ENCODE measurements at regions of chr18 and their contacts with region 1.

Region 1: DNA sequence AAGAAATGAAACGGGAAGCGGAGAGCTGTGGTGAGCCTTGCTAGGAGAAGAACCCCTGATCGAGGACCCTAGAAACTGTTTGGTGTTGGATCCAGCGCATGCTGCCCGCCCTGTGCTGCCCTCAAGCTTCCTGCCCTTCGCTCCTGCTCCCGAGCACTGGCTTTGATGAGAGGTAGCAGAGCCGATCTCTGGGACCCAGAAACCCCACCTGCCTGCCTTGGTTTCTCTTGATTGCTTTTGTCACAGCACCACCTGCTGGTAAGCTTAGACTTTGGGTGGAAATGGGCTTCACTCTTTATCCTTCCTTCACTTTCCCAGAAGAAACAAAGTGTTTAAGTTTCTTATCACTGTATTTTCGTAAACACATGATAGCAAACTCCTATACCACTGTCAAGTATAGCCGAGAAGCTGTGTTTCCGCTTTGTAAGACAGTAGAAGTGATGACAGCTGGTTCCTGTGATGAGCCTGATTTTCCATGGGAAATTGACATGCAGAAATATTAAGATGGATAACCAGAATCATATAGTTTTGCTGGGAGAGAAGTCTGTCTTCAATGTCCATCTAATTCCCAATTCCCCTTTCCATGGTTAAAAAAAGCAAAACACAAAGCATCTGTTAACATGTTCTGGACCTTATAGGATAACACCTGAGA is 267.4 kb downstream of the PHLPP1 start:
- DNase-seq: peak in 2 of 4 donors; percentile 53 to 67
- ATAC-seq: peak; percentile 89
- H3K4me3 ChIP-seq: peak overlapping the region in 1 of 2 donors; percentile 31
- H3K27ac ChIP-seq: no peak overlapping the region
- H3K4me1 ChIP-seq: peaks cover 0 to 27% of the 10 kb centered on the region in 2 donors
- H3K27me3 ChIP-seq: no peaks in the 10 kb centered on the region
- CTCF ChIP-seq: peak; percentile 65 to 78

Region 2: GRCh38 chr18:62584241-62585120 is 398.2 kb before region 1 on chr18:
- intact Hi-C with region 1: loop called in 1 of 2 experiments (anchors 10 kb)
- DNase-seq: peak in 3 of 4 donors; percentile 76 to 94 (median 82)
- ATAC-seq: peak; percentile 95
- H3K4me3 ChIP-seq: no peak overlapping the region
- H3K27ac ChIP-seq: peak overlapping the region in 1 of 2 donors; percentile 23
- H3K4me1 ChIP-seq: peaks cover 6 to 18% of the 10 kb centered on the region in 2 donors
- H3K27me3 ChIP-seq: no peaks in the 10 kb centered on the region
- CTCF ChIP-seq: peak; percentile 85 to 92